ENCODE measurements at regions of chr14 and their contacts with region 1.

Region 1: DNA sequence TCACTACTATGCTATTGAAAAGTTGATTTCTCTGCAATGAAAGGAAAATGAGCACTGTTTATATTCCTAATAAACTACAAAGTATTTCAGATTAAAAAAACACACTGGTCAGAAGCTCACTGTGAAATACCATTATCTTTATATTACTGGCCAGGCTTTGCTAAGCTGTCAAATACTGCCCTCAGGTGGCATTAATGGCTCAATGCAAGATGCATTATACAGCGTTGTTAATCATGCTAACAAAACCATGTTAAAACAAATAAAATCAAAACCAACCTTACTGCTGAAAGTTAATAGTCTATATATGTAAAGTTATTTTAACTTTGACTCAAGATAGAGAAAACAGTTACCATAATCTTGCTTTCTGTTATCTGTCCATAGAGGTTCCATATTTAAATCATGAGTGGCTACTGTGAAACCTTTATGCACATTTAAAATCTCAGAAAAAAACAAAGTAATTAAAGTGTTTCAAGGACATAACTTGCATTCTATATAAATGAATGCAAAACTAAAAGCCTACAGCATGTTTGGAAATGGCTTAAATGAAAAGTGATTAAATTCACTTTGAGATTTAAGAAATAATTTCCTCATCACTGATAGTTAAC is 121.7 kb downstream of the RALGAPA1 start:
- DNase-seq: no peak
- H3K4me3 Mint-ChIP-seq: no peak overlapping the region
- H3K27ac Mint-ChIP-seq: no peak overlapping the region
- H3K4me1 Mint-ChIP-seq: peaks cover 23% of the 10 kb centered on the region
- H3K27me3 Mint-ChIP-seq: no peaks in the 10 kb centered on the region

Region 2: GRCh38 chr14:35140718-35141581 is 546.5 kb before region 1 on chr14:
- intact Hi-C with region 1: loop called (anchors 5 kb)
- DNase-seq: no peak
- H3K4me3 Mint-ChIP-seq: no peak overlapping the region
- H3K27ac Mint-ChIP-seq: no peak overlapping the region
- H3K4me1 Mint-ChIP-seq: peaks cover 21% of the 10 kb centered on the region
- H3K27me3 Mint-ChIP-seq: no peaks in the 10 kb centered on the region

Region 3: DNA sequence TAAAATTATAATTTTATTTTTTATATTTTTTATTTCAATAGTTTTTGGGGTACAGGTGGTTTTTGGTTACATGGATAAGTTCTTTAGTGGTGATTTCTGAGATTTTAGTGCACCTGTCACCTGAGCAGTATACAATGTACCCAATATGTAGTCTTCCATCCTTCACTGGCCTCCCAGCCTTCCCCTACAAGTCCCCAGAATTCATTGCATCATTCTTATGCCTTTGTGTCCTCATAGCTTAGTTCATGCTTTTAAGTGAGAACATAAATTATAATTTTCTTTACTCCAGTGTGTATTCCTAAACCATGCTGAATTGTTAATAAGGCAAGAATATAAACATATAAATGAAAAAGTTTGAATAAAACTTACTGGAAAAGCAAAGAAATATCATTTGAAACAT is 263.8 kb before region 1 on chr14:
- intact Hi-C with region 1: loop called (anchors 2 kb)
- DNase-seq: no peak
- H3K4me3 Mint-ChIP-seq: no peak overlapping the region
- H3K27ac Mint-ChIP-seq: no peak overlapping the region
- H3K4me1 Mint-ChIP-seq: peaks cover 16% of the 10 kb centered on the region
- H3K27me3 Mint-ChIP-seq: no peaks in the 10 kb centered on the region

Region 4: GRCh38 chr14:35438910-35439713 is 248.3 kb before region 1 on chr14:
- intact Hi-C with region 1: loop called (anchors 5 kb)
- DNase-seq: no peak
- H3K4me3 Mint-ChIP-seq: no peak overlapping the region
- H3K27ac Mint-ChIP-seq: no peak overlapping the region
- H3K4me1 Mint-ChIP-seq: peaks cover 6% of the 10 kb centered on the region
- H3K27me3 Mint-ChIP-seq: no peaks in the 10 kb centered on the region

Region 5: DNA sequence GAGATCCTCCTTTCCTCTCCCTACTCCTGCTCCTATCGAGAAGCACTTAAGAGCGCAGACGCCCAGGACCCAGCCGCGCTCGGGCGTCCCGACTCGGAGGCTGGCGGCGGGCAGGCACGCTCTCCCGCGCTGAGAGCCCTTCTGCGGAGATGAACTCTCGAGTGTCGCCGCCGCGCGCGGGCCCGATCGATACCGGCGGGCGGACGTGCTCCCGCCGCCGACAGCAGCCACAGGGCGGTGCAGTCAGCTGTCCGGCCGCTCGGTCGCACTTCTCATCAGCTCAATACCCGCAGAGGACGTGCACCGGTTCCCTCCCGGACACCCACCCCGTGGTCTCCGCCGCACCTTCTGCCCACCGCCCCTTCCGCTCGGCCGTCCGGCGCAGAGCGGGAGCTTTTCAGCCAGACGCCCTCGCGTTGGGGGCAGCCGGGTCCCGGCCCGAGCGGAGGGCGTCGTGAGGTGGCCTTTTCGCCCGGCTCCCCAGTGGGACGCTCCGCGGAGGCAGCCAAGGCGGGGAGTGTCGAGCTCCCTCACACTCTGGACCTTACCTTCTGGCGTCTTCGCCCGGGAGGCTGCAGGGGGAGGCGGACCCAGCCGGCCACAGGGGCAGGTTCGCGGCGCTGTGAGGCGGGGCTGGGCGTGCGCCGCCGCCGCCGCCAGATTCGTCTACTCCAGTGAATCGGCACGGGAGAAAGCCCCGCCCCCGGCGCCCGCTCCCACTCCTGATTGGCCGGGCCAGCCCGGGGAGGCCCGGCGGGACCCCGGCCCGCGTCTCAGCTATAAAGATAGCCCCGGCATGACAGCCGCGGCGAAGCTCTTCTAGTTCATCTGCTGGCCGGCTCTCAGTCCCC is 153.9 kb before region 1 on chr14 and contains the start of gene INSM2:
- intact Hi-C with region 1: loop called (anchors 5 kb)
- DNase-seq: peak; percentile 47
- H3K4me3 Mint-ChIP-seq: peak within 1 kb of the TSS; percentile 73
- H3K27ac Mint-ChIP-seq: no peak within 1 kb of the TSS
- H3K4me1 Mint-ChIP-seq: peaks cover 6% of the 10 kb centered on the region
- H3K27me3 Mint-ChIP-seq: peaks cover 72% of the 10 kb centered on the region
- total RNA-seq, gene INSM2: not detected in 2 replicates

Region 6: DNA sequence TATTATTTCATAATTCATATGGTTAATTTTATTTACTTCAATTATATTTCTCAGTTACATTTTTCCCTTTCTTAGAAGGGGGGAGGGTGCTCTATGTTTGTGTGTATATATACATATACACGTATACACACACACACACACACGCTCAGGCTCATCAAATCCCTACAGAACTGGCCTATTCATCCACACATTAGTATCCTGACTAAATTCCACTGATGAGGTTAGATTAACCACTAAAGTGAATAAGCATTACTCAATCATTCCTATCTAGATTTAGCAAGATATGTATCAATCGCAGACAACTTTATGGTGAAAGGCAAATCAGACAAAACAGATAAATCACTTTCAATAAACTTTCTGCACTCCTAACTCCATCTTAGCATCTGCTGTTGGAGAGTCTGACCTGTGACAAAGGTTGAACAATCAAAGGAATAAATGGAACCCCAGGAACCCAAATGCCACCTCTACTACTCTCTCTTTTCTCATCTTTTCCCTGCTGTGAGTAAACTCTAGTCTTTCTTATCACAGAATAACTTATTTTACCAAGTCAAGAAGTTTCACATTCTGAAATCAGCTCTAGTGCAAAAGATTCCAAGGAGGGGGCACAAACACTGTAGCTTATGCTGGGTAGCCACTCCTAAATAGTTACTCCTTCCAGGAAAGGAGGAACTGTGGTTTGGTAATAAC is 54.1 kb after region 1 on chr14:
- intact Hi-C with region 1: loop called (anchors 2 kb)
- DNase-seq: no peak
- H3K4me3 Mint-ChIP-seq: no peak overlapping the region
- H3K27ac Mint-ChIP-seq: peak overlapping the region; percentile 54
- H3K4me1 Mint-ChIP-seq: peaks cover 22% of the 10 kb centered on the region
- H3K27me3 Mint-ChIP-seq: peaks cover 3% of the 10 kb centered on the region

Region 7: GRCh38 chr14:35808076-35808652 is 120.7 kb after region 1 on chr14:
- intact Hi-C with region 1: loop called (anchors 2 kb)
- DNase-seq: no peak
- H3K4me3 Mint-ChIP-seq: peak overlapping the region; percentile 99
- H3K27ac Mint-ChIP-seq: peak overlapping the region; percentile 94
- H3K4me1 Mint-ChIP-seq: peaks cover 21% of the 10 kb centered on the region
- H3K27me3 Mint-ChIP-seq: peaks cover 7% of the 10 kb centered on the region

Region 8: GRCh38 chr14:35855876-35856481 is 168.5 kb after region 1 on chr14:
- intact Hi-C with region 1: no loop called
- DNase-seq: no peak
- H3K4me3 Mint-ChIP-seq: no peak overlapping the region
- H3K27ac Mint-ChIP-seq: no peak overlapping the region
- H3K4me1 Mint-ChIP-seq: peaks cover 3% of the 10 kb centered on the region
- H3K27me3 Mint-ChIP-seq: no peaks in the 10 kb centered on the region